Ovary (tissue), 10 donors: ENCODE measurements at regions of chr19 and their contacts with region 1.

Region 1: GRCh38 chr19:40420766-40421764 is 4.7 kb downstream of the SERTAD1 start:
- DNase-seq: peak; percentile 95 to 97 (median 96)
- H3K4me3 ChIP-seq: peak overlapping the region; percentile 67
- H3K27ac ChIP-seq: peak overlapping the region; percentile 98
- H3K4me1 ChIP-seq: peaks cover 2% of the 10 kb centered on the region
- H3K27me3 ChIP-seq: no peaks in the 10 kb centered on the region
- CTCF ChIP-seq: peak; percentile 92 to 93 (median 93)
- EP300 ChIP-seq: peak; percentile 52
- POLR2A ChIP-seq: peak; percentile 83

Region 2: GRCh38 chr19:40603389-40604135 is 182.5 kb after region 1 on chr19:
- intact Hi-C with region 1: loop called in 2 of 4 experiments (anchors 5 kb)
- DNase-seq: peak; percentile 98 to 99 (median 99)
- H3K4me3 ChIP-seq: peak overlapping the region; percentile 60
- H3K27ac ChIP-seq: peak overlapping the region; percentile 87 to 92
- H3K4me1 ChIP-seq: peaks cover 13% of the 10 kb centered on the region
- H3K27me3 ChIP-seq: no peaks in the 10 kb centered on the region
- CTCF ChIP-seq: peak in 1 of 3 donors; percentile 28
- EP300 ChIP-seq: peak; percentile 9
- POLR2A ChIP-seq: peak; percentile 59